PC-3 (cell line): ENCODE measurements at regions of chr22 and their contacts with region 1.

Region 1: DNA sequence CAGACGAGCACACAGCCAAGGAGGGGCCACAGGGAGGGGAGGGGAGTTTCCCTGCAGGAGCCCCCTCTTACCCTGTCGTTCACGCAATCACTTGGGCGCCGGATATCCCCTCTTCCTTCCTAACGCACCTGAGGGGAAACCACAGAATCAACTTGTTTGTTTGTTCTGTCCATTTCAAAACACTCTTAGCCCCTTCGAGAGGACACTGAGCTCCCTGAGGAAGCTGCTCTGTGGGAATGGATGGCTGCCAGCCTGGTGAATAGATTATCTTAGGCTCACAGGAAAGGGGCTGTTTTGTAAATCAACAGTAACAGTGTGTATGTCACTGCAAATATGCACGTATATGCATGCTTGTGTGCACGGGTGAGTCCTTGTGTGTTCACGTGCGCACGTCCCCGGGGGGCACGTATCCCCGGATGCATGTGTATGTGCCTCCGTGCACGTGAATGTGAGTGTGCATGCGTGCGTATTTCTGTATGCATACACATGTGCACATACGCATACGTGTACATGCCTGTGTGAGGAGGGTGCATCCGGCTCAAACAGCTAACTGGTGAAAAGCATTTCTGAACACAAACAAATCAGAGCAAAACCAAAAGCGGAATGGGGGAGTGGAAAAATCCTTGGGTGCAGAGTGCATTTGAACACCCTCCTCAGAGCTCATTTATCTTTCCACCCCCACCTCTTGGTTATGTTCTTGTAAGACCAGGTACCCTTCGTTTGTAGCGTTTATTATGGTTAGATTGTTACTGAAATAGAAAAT is 7.2 kb downstream of the ARSA start:
- DNase-seq: peak; percentile 16
- ATAC-seq: peak; percentile 69
- H3K4me3 ChIP-seq: peak overlapping the region; percentile 75
- H3K27ac ChIP-seq: no peak overlapping the region
- H3K4me1 ChIP-seq: peaks cover 15% of the 10 kb centered on the region; the same call in 1 of the 2 replicates
- H3K27me3 ChIP-seq: no peaks in the 10 kb centered on the region
- CTCF ChIP-seq: peak; percentile 66; the same call in 1 of the 2 replicates

Region 2: GRCh38 chr22:50474668-50475492 is 145.9 kb before region 1 on chr22 and contains the start of gene SBF1:
- CTCF ChIA-PET with region 1: interaction called, 12 read pairs
- POLR2A ChIA-PET with region 1: no interaction called
- intact Hi-C with region 1: no loop called
- DNase-seq: peak; percentile 87
- ATAC-seq: peak; percentile 91
- H3K4me3 ChIP-seq: peak within 1 kb of the TSS; percentile 84
- H3K27ac ChIP-seq: no peak within 1 kb of the TSS
- H3K4me1 ChIP-seq: peaks cover 29% of the 10 kb centered on the region
- H3K27me3 ChIP-seq: no peaks in the 10 kb centered on the region
- CTCF ChIP-seq: no peak
- total RNA-seq, gene SBF1: 48.5 and 67.1 TPM in 2 replicates

Region 3: DNA sequence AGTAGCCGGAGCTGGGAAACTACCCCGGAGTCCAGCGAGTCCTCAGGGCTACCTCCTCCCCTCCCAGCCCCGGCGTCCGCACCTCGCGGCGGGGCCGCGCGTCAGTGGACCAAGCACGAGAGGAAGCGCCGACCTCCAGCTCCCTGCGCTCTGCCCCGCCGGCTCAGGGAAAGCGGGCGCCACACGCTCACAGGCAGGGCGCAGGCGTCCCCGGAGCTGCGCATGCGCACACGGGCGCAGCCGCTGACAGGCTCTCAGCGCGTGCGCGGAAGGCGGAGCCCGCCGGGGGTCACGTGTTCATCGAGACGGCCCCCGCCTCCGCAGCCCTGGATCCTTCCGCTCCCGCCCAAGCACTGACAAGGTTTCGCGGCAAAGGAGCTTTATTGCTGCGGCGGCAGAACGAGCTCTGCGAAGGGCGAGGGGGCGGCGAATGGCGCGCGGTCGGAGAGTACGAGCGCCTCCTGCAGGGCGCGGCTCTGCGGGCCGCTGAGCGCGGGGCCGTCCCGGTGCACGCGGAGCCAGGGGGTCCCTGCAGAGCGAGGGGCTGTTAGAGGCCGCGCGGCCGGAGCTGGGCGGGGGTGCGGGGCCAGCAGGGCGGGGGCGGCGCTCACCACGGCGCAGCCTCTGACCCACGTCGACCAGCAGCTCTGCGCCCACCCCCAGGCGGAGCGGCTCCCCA is 95.2 kb before region 1 on chr22 and contains the start of gene SCO2:
- CTCF ChIA-PET with region 1: interaction called, 16 read pairs
- POLR2A ChIA-PET with region 1: interaction called, 7 read pairs
- intact Hi-C with region 1: loop called (anchors 5 kb)
- DNase-seq: peak; percentile 95
- ATAC-seq: peak; percentile 48
- H3K4me3 ChIP-seq: peak within 1 kb of the TSS; percentile 81
- H3K27ac ChIP-seq: peak within 1 kb of the TSS; percentile 78
- H3K4me1 ChIP-seq: peaks cover 12% of the 10 kb centered on the region; the same call in 1 of the 2 replicates
- H3K27me3 ChIP-seq: no peaks in the 10 kb centered on the region
- CTCF ChIP-seq: no peak; the same call in 1 of the 2 replicates
- total RNA-seq, gene SCO2: 5.7 and 5.8 TPM in 2 replicates

Region 4: GRCh38 chr22:50531962-50532674 is 88.7 kb before region 1 on chr22:
- CTCF ChIA-PET with region 1: interaction called, 15 read pairs
- POLR2A ChIA-PET with region 1: no interaction called
- intact Hi-C with region 1: loop called (anchors 5 kb)
- DNase-seq: peak; percentile 43
- ATAC-seq: peak; percentile 43
- H3K4me3 ChIP-seq: peak overlapping the region; percentile 78
- H3K27ac ChIP-seq: peak overlapping the region; percentile 20; the same call in 1 of the 2 replicates
- H3K4me1 ChIP-seq: peaks cover 10% of the 10 kb centered on the region; the same call in 1 of the 2 replicates
- H3K27me3 ChIP-seq: no peaks in the 10 kb centered on the region
- CTCF ChIP-seq: no peak

Region 5: GRCh38 chr22:50576070-50576469 is 44.7 kb before region 1 on chr22:
- CTCF ChIA-PET with region 1: interaction called, 3 read pairs
- POLR2A ChIA-PET with region 1: no interaction called
- intact Hi-C with region 1: loop called (anchors 1 kb)
- DNase-seq: peak; percentile 37
- ATAC-seq: peak; percentile 64
- H3K4me3 ChIP-seq: no peak overlapping the region
- H3K27ac ChIP-seq: no peak overlapping the region
- H3K4me1 ChIP-seq: no peaks in the 10 kb centered on the region
- H3K27me3 ChIP-seq: no peaks in the 10 kb centered on the region
- CTCF ChIP-seq: peak; percentile 52

Region 6: GRCh38 chr22:50691521-50691920 is 70.7 kb after region 1 on chr22:
- CTCF ChIA-PET with region 1: interaction called, 6 read pairs
- POLR2A ChIA-PET with region 1: no interaction called
- intact Hi-C with region 1: loop called (anchors 2 kb)
- DNase-seq: peak; percentile 62
- ATAC-seq: 0 out of 2 replicates have a peak, but pooled peaks have one; percentile 31
- H3K4me3 ChIP-seq: no peak overlapping the region
- H3K27ac ChIP-seq: no peak overlapping the region
- H3K4me1 ChIP-seq: no peaks in the 10 kb centered on the region
- H3K27me3 ChIP-seq: no peaks in the 10 kb centered on the region
- CTCF ChIP-seq: peak; percentile 80